ENCODE measurements at regions of chr6 and their contacts with region 1.

Region 1: GRCh38 chr6:13328076-13328874 is at the start of gene TBC1D7:
- DNase-seq: peak; percentile 95
- H3K4me3 Mint-ChIP-seq: peak within 1 kb of the TSS; percentile 95
- H3K27ac Mint-ChIP-seq: peak within 1 kb of the TSS; percentile 93
- H3K4me1 Mint-ChIP-seq: peaks cover 30% of the 10 kb centered on the region
- H3K27me3 Mint-ChIP-seq: no peaks in the 10 kb centered on the region

Region 2: GRCh38 chr6:12911387-12911960 is 416.8 kb before region 1 on chr6:
- CTCF ChIA-PET with region 1: interaction called, 67 read pairs
- DNase-seq: no peak
- H3K4me3 Mint-ChIP-seq: no peak overlapping the region
- H3K27ac Mint-ChIP-seq: no peak overlapping the region
- H3K4me1 Mint-ChIP-seq: no peaks in the 10 kb centered on the region
- H3K27me3 Mint-ChIP-seq: peaks cover 17% of the 10 kb centered on the region

Region 3: GRCh38 chr6:13163161-13163944 is 164.9 kb before region 1 on chr6:
- CTCF ChIA-PET with region 1: no interaction called
- DNase-seq: no peak
- H3K4me3 Mint-ChIP-seq: no peak overlapping the region
- H3K27ac Mint-ChIP-seq: no peak overlapping the region
- H3K4me1 Mint-ChIP-seq: peaks cover 5% of the 10 kb centered on the region
- H3K27me3 Mint-ChIP-seq: peaks cover 9% of the 10 kb centered on the region

Region 4: DNA sequence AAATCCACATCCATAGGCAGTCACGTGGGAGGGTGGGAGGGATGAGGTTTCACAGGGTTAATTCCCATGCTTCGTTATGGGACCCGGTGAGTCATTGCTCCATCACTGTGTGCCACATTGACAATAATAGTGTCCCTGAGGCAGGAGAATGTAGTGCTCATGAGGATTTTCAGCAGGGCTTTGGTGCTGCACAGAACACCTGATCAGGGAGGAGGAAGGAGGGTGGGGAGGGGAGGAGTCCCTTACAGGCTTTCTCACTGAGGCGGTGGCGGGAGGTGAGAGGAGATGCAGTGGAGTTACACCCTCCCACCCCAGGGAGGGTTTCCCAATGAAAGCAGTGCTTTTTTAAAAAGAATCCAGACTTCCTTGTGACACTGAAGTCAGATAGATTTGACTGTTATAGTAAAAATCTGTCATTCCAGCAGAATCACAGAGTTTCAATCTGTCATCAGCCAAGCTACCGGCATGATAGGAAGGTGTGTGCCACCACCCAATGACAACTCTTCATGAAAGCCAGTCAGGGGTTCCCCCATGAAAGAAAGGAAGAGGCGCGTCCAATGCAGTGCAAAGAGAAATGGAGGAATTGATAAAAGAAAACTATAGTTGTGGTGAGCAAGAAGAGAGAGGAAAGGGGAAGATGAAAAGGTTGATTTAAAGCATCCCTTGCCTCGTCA is 144.7 kb before region 1 on chr6:
- CTCF ChIA-PET with region 1: no interaction called
- DNase-seq: no peak
- H3K4me3 Mint-ChIP-seq: no peak overlapping the region
- H3K27ac Mint-ChIP-seq: no peak overlapping the region
- H3K4me1 Mint-ChIP-seq: peaks cover 3% of the 10 kb centered on the region
- H3K27me3 Mint-ChIP-seq: peaks cover 7% of the 10 kb centered on the region

Region 5: GRCh38 chr6:13194852-13195251 is 133.4 kb before region 1 on chr6:
- CTCF ChIA-PET with region 1: interaction called, 12 read pairs
- DNase-seq: no peak
- H3K4me3 Mint-ChIP-seq: no peak overlapping the region
- H3K27ac Mint-ChIP-seq: no peak overlapping the region
- H3K4me1 Mint-ChIP-seq: no peaks in the 10 kb centered on the region
- H3K27me3 Mint-ChIP-seq: peaks cover 14% of the 10 kb centered on the region

Region 6: GRCh38 chr6:13355999-13356785 is 27.9 kb after region 1 on chr6:
- CTCF ChIA-PET with region 1: no interaction called
- DNase-seq: peak; percentile 52
- H3K4me3 Mint-ChIP-seq: peak overlapping the region; percentile 74
- H3K27ac Mint-ChIP-seq: peak overlapping the region; percentile 100
- H3K4me1 Mint-ChIP-seq: peaks cover 69% of the 10 kb centered on the region
- H3K27me3 Mint-ChIP-seq: no peaks in the 10 kb centered on the region